ENCODE measurements at regions of chr6 and their contacts with region 1.

Region 1: DNA sequence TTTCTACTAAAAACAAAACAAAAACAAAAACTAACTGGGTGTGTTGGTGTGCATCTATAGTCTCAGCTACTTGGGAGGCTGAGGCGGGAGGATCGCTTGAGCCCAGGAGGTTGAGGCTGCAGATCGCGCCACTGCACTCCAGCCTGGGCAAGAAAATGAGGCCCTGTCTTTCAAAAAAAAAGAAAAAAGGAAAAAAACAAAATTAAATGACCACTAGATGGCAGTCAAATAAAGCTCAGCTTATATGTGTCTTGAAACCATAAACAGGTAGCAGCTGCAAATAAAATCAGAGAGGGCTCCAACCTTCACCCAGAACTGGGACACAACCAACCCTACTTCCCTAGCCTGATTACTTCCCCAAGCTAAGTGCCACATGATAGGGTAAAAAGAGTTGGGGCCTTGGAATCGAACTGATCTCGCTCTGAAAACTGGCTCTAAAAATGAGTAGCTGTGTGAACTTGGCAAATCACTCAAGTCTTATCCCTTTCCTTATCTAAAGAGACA is 67.1 kb upstream of the ADGRF4 start:
- DNase-seq: no peak
- H3K4me3 ChIP-seq: no peak overlapping the region
- H3K27ac ChIP-seq: no peak overlapping the region
- H3K4me1 ChIP-seq: no peaks in the 10 kb centered on the region
- H3K27me3 ChIP-seq: no peaks in the 10 kb centered on the region
- CTCF ChIP-seq: peak; percentile 44 to 86 (median 74)
- POLR2A ChIP-seq: no peak

Region 2: DNA sequence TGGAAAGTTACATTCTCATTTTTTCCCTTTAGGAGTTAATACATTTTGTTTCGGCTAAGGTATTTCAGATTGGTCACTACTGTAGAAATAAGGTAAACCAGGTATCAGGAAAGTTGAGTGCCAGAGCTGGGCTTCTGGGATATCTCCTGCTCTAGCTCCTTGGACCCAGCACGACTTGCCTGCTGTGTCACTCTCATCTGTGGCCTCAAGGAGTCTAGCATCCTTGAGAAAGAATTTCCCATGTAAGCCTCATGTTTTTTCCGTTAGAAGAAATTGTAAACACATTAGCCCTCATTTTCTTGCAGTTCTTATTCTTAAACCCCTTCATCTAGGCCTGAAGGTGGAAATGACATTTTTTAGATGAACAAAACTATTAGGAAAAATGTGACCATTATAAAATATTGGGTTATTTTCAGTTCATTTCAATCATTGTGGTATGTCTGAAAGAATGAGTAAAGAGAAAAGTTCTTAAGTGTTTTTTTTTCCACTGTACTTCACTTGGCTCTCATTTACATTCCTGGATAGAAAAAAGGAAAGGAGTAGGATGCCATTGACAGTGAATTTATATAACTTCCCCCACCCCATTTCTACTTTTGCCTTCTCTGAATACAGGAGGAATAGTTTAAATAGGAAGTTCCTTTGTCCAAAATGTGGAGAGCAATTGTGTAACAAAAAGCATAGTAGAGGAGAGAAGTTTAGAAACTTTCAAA is 107.0 kb before region 1 on chr6:
- intact Hi-C with region 1: no loop called
- DNase-seq: no peak
- H3K4me3 ChIP-seq: no peak overlapping the region
- H3K27ac ChIP-seq: no peak overlapping the region
- H3K4me1 ChIP-seq: peaks cover 0 to 4% of the 10 kb centered on the region in 2 donors
- H3K27me3 ChIP-seq: no peaks in the 10 kb centered on the region
- CTCF ChIP-seq: no peak
- POLR2A ChIP-seq: no peak

Region 3: GRCh38 chr6:47571488-47571887 is 59.8 kb before region 1 on chr6:
- intact Hi-C with region 1: no loop called
- DNase-seq: no peak
- H3K4me3 ChIP-seq: no peak overlapping the region
- H3K27ac ChIP-seq: no peak overlapping the region
- H3K4me1 ChIP-seq: no peaks in the 10 kb centered on the region
- H3K27me3 ChIP-seq: no peaks in the 10 kb centered on the region
- CTCF ChIP-seq: no peak
- POLR2A ChIP-seq: no peak

Region 4: GRCh38 chr6:47769982-47770381 is 138.7 kb after region 1 on chr6:
- intact Hi-C with region 1: loop called (anchors 5 to 10 kb)
- DNase-seq: no peak
- H3K4me3 ChIP-seq: no peak overlapping the region
- H3K27ac ChIP-seq: no peak overlapping the region
- H3K4me1 ChIP-seq: no peaks in the 10 kb centered on the region
- H3K27me3 ChIP-seq: no peaks in the 10 kb centered on the region
- CTCF ChIP-seq: no peak
- POLR2A ChIP-seq: no peak

Region 5: GRCh38 chr6:49038294-49038822 is 1407.0 kb after region 1 on chr6:
- intact Hi-C with region 1: no loop called
- DNase-seq: no peak
- H3K4me3 ChIP-seq: no peak overlapping the region
- H3K27ac ChIP-seq: no peak overlapping the region
- H3K4me1 ChIP-seq: no peaks in the 10 kb centered on the region
- H3K27me3 ChIP-seq: no peaks in the 10 kb centered on the region
- CTCF ChIP-seq: no peak
- POLR2A ChIP-seq: no peak

Measured in adrenal gland (tissue), 19 donors.